GM12878 (cell line): ENCODE measurements at regions of chr9 and their contacts with region 1.

Region 1: GRCh38 chr9:110152704-110153374 is 55.1 kb downstream of the C9orf152 start:
- DNase-seq: no peak
- ATAC-seq: peak; percentile 23
- H3K4me3 ChIP-seq: 0 out of 2 replicates have a peak overlapping the region, but pooled peaks have one; percentile 17
- H3K27ac ChIP-seq: no peak overlapping the region
- H3K4me1 ChIP-seq: peaks cover 57% of the 10 kb centered on the region
- H3K27me3 ChIP-seq: no peaks in the 10 kb centered on the region
- CTCF ChIP-seq: peak; percentile 68 to 83 (median 78); a peak in 5 of 6 replicates
- EP300 ChIP-seq: no peak
- POLR2A ChIP-seq: no peak; the same call in none of the 2 replicates
- RAD21 ChIP-seq: peak; percentile 96

Region 2: GRCh38 chr9:109910671-109911518 is 241.9 kb before region 1 on chr9:
- CTCF ChIA-PET with region 1: interaction called, 597 read pairs
- POLR2A ChIA-PET with region 1: interaction called, 7 read pairs
- RAD21 ChIA-PET with region 1: interaction called, 424 read pairs
- SMC1A ChIA-PET with region 1: interaction called, 406 read pairs
- in situ Hi-C with region 1: no loop called
- intact Hi-C with region 1: no loop called
- DNase-seq: no peak
- ATAC-seq: no peak
- H3K4me3 ChIP-seq: no peak overlapping the region
- H3K27ac ChIP-seq: no peak overlapping the region
- H3K4me1 ChIP-seq: peaks cover 66% of the 10 kb centered on the region
- H3K27me3 ChIP-seq: no peaks in the 10 kb centered on the region
- CTCF ChIP-seq: no peak
- EP300 ChIP-seq: no peak
- POLR2A ChIP-seq: no peak
- RAD21 ChIP-seq: no peak

Region 3: DNA sequence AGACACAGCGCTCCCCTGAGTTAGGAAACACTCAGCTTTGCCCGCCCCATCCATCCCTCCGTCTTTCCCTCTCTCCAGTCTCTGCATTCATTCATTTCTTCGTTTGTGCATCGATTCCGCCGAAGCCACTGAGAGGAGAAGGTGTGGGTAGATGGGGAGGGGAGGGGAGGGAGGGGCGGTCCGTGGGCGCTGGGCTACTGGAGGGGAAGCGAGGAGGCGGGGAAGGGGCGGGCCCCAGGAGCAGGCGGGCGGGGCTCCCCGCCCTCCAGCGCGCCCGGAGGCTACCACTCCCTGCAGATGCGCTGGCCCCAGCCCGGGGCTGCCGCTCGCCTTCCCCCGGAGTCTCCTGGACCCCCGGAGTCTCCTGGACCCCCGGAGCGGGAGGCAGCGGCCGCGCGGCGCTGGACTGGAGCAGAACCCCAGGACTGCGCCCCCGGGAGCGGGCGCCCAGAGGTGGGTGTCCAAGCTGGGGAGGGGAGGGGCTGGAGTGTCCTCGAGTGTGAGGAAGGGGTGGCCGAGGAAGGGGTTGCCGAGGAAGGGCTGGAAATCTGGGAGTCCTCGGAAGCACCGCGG is 104.3 kb before region 1 on chr9:
- CTCF ChIA-PET with region 1: interaction called, 35 read pairs
- POLR2A ChIA-PET with region 1: interaction called, 17 read pairs
- RAD21 ChIA-PET with region 1: interaction called, 84 read pairs
- SMC1A ChIA-PET with region 1: interaction called, 78 read pairs
- in situ Hi-C with region 1: loop called (anchors 10 kb)
- intact Hi-C with region 1: loop called (anchors 2 kb)
- DNase-seq: peak; percentile 56
- ATAC-seq: peak; percentile 90
- H3K4me3 ChIP-seq: peak overlapping the region; percentile 100
- H3K27ac ChIP-seq: peak overlapping the region; percentile 87
- H3K4me1 ChIP-seq: 0 out of 2 replicates have a peak, but pooled peaks cover 4% of the 10 kb centered on the region
- H3K27me3 ChIP-seq: no peaks in the 10 kb centered on the region; a peak in 1 of 4 replicates
- CTCF ChIP-seq: no peak
- EP300 ChIP-seq: no peak
- POLR2A ChIP-seq: peak; percentile 88
- RAD21 ChIP-seq: no peak

Region 4: DNA sequence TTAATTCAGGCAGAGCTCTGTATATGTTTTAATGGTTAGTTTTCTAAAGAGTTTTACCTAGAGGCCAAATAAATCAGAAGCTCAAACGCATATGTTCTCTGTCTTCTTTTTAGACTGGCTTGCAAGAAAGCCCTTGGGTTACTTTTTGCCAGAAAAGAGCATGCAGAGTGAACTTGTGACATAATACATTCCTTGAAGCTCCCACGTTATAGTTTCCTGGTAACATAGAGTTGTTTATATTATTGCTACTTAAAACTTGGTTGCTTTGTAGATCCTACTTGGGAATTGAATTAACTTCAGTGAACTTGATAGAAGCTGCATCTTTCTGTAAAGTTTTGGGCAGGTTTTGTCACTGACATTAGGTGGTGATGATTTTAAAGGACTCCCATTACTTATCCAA is 47.7 kb before region 1 on chr9:
- CTCF ChIA-PET with region 1: interaction called, 16 read pairs
- POLR2A ChIA-PET with region 1: interaction called, 30 read pairs
- RAD21 ChIA-PET with region 1: interaction called, 282 read pairs
- SMC1A ChIA-PET with region 1: interaction called, 122 read pairs
- in situ Hi-C with region 1: no loop called
- intact Hi-C with region 1: loop called (anchors 1 kb)
- DNase-seq: no peak
- ATAC-seq: no peak
- H3K4me3 ChIP-seq: no peak overlapping the region
- H3K27ac ChIP-seq: no peak overlapping the region
- H3K4me1 ChIP-seq: peaks cover 58% of the 10 kb centered on the region
- H3K27me3 ChIP-seq: no peaks in the 10 kb centered on the region
- CTCF ChIP-seq: no peak
- EP300 ChIP-seq: no peak
- POLR2A ChIP-seq: no peak
- RAD21 ChIP-seq: no peak

Region 5: GRCh38 chr9:110256380-110257096 is 103.7 kb after region 1 on chr9 and contains the start of gene TXN:
- CTCF ChIA-PET with region 1: interaction called, 3 read pairs
- POLR2A ChIA-PET with region 1: interaction called, 5 read pairs
- RAD21 ChIA-PET with region 1: interaction called, 16 read pairs
- SMC1A ChIA-PET with region 1: interaction called, 5 read pairs
- in situ Hi-C with region 1: no loop called
- intact Hi-C with region 1: no loop called
- DNase-seq: peak; percentile 87
- ATAC-seq: peak; percentile 69
- H3K4me3 ChIP-seq: peak within 1 kb of the TSS; percentile 92
- H3K27ac ChIP-seq: peak within 1 kb of the TSS; percentile 91
- H3K4me1 ChIP-seq: peaks cover 24% of the 10 kb centered on the region
- H3K27me3 ChIP-seq: no peaks in the 10 kb centered on the region
- CTCF ChIP-seq: no peak
- EP300 ChIP-seq: peak; percentile 41 to 47; a peak in 1 of 4 replicates
- POLR2A ChIP-seq: peak; percentile 99
- RAD21 ChIP-seq: no peak
- polyA plus RNA-seq, gene TXN: 2,263 to 2,304 TPM